HepG2 (cell line): ENCODE measurements at regions of chr1 and their contacts with region 1.

Region 1: DNA sequence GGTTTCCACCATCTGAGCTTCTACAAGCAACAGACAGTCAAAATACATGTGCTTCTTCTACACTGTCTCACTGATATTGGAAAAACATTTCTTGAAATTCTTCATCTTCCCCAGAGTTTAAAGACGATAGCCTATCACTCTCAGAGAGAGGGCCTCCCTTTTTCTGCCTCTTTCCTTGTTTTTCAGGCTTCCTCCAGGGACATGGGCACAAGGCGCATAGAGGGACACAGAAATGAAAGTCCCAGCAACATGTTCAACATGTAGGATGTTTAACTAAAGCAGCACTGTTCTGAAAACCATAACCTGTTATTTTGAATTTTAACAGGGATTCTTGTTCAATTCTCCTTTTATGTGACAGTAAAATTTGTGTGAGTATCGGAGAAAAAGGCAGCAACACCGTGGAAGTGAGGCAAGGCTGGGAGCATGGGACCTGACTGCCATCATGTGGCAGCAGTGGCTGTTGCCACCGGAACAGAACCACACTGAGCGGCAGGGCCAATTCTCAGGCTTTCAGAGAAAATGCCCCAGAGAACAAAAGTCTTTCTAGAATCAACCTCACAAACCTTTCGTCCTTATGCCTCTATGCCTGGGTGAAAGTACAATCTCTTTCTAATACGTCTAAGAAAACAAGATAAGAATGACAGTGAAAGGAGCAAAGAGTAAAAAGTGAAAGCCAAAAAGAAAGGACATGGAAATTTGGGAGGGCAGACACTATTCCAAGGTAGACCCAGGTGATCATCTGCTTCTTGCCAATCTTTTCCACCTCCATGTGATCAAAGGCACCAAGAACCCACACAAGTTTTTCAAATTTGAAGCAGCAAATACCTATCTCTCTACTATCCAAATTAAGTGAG is 54.5 kb downstream of the PCNX2 start:
- DNase-seq: peak; percentile 8
- ATAC-seq: peak; percentile 97
- H3K4me3 ChIP-seq: no peak overlapping the region
- H3K27ac ChIP-seq: no peak overlapping the region
- H3K4me1 ChIP-seq: 0 out of 2 replicates have a peak, but pooled peaks cover 16% of the 10 kb centered on the region
- H3K27me3 ChIP-seq: no peaks in the 10 kb centered on the region; a peak in 1 of 5 replicates
- CTCF ChIP-seq: peak; percentile 85
- EP300 ChIP-seq: no peak
- POLR2A ChIP-seq: no peak
- RAD21 ChIP-seq: peak; percentile 79

Region 2: GRCh38 chr1:231757101-231757404 is 1484.0 kb before region 1 on chr1:
- CTCF ChIA-PET with region 1: no interaction called
- POLR2A ChIA-PET with region 1: no interaction called
- in situ Hi-C with region 1: loop called (anchors 25 kb)
- intact Hi-C with region 1: no loop called
- DNase-seq: no peak
- ATAC-seq: peak; percentile 40
- H3K4me3 ChIP-seq: no peak overlapping the region
- H3K27ac ChIP-seq: no peak overlapping the region
- H3K4me1 ChIP-seq: no peaks in the 10 kb centered on the region
- H3K27me3 ChIP-seq: no peaks in the 10 kb centered on the region
- CTCF ChIP-seq: no peak
- EP300 ChIP-seq: no peak
- POLR2A ChIP-seq: no peak
- RAD21 ChIP-seq: no peak

Region 3: DNA sequence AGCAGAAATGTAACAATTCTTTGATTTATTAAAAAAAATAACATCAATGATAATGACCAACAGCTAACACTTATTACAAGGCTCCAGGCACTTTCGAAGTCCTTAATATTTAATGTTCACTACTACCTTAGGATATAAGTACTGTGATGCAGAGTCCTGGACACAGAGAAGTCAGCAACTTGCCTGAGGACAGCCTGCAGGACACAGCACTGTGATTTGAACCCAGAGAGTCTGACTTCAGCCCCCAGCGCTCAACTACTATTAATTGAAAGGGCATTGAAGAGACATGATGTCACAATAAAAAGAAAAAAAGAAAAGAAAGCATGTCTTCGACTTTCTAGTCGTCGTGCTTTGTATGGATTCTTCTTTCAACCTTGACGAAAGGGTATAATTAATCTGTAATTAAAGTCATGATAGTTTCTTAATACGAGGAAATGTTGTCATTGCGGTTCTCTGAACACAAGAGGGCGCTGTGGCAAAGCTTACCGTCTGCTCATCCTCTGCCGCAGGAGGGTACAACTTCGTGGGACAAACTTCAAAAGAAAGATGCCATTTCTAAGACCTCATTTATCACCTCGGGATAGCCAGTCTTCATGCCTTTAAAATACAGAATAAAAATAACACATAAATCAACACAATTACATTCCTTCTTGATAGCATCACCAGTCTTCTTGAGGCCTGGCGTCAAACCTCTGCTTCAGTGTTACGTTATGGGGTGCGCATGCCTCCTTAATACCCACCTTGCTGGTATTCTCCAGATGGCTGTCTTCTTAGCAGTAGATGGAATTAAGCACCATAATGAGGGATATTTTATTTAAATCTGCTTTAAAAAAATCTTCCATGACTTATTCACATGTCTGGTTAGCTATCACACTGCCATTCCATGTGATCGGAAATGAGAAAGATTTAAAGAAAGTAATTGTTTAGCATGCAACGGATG is 1374.4 kb before region 1 on chr1:
- CTCF ChIA-PET with region 1: no interaction called
- POLR2A ChIA-PET with region 1: no interaction called
- in situ Hi-C with region 1: loop called (anchors 25 kb)
- intact Hi-C with region 1: no loop called
- DNase-seq: peak; percentile 36
- ATAC-seq: peak; percentile 38; the same call in 1 of the 3 replicates
- H3K4me3 ChIP-seq: no peak overlapping the region
- H3K27ac ChIP-seq: no peak overlapping the region
- H3K4me1 ChIP-seq: no peaks in the 10 kb centered on the region
- H3K27me3 ChIP-seq: no peaks in the 10 kb centered on the region; a peak in 1 of 5 replicates
- CTCF ChIP-seq: peak; percentile 81
- EP300 ChIP-seq: no peak
- POLR2A ChIP-seq: no peak
- RAD21 ChIP-seq: peak; percentile 67; the same call in 1 of the 2 replicates

Region 4: GRCh38 chr1:232259333-232259732 is 981.7 kb before region 1 on chr1:
- CTCF ChIA-PET with region 1: no interaction called
- POLR2A ChIA-PET with region 1: no interaction called
- in situ Hi-C with region 1: no loop called
- intact Hi-C with region 1: loop called (anchors 5 kb)
- DNase-seq: no peak
- ATAC-seq: no peak
- H3K4me3 ChIP-seq: no peak overlapping the region
- H3K27ac ChIP-seq: no peak overlapping the region
- H3K4me1 ChIP-seq: no peaks in the 10 kb centered on the region
- H3K27me3 ChIP-seq: peaks cover 0 to 9% of the 10 kb centered on the region in 2 experiments; a peak in 1 of 5 replicates
- CTCF ChIP-seq: no peak
- EP300 ChIP-seq: no peak
- POLR2A ChIP-seq: no peak
- RAD21 ChIP-seq: no peak

Region 5: DNA sequence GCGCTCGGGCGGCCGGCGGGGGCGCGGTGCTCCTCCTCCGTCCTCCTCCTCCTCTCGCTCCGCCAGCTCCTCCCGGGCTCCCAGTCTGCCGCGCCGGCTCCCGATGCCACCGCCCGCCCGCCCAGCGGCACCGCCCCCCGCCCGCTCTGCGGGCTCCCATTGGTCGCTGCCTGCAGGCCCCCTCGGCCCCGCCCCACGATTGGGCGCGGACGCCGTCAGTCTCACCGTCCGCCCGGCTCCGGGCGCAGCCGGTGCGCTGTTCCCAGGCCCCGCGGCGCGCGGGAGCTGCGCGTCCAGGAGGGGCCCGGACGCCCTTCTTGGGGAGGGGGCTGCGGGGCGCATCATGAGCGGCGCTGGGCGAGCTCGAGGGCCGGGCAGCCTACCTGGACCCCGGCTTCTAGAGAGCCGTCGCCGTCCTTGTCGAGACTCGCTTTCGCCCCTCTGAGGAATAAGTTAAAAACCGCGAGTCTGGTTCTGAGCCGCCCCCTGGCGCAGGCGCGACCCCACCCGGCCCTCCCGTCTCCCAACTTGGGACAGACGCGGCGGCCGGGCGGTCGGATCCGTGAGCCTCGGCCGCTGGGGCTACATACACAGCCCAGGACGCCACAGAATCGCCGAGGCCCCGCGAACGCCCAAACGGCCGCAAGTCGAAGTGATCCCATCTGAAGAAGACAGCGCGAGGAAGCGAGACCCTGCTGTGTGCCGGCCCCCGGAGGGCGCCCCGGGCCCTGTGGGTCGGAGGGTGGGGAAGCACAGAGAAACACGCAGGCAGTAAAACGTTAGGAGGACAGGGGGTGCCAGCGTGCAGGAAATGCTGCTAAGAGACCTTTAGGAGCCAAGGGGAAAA is 610.8 kb before region 1 on chr1 and contains the start of gene SIPA1L2:
- CTCF ChIA-PET with region 1: interaction called, 15 read pairs
- POLR2A ChIA-PET with region 1: no interaction called
- in situ Hi-C with region 1: loop called (anchors 5 kb)
- intact Hi-C with region 1: loop called (anchors 1 kb)
- DNase-seq: peak; percentile 52
- ATAC-seq: peak; percentile 99
- H3K4me3 ChIP-seq: peak within 1 kb of the TSS; percentile 52 to 63 (median 56); a peak in 4 of 6 replicates
- H3K27ac ChIP-seq: no peak within 1 kb of the TSS
- H3K4me1 ChIP-seq: no peaks in the 10 kb centered on the region
- H3K27me3 ChIP-seq: peaks cover 5 to 48% of the 10 kb centered on the region in 2 experiments; a peak in 4 of 5 replicates
- CTCF ChIP-seq: peak; percentile 57
- EP300 ChIP-seq: no peak
- POLR2A ChIP-seq: no peak
- RAD21 ChIP-seq: no peak
- total RNA-seq, gene SIPA1L2: 0.03 TPM in 1 of 2 replicates, not detected in the other

Region 6: GRCh38 chr1:232635778-232636356 is 605.2 kb before region 1 on chr1:
- CTCF ChIA-PET with region 1: interaction called, 15 read pairs
- POLR2A ChIA-PET with region 1: no interaction called
- in situ Hi-C with region 1: loop called (anchors 5 kb)
- intact Hi-C with region 1: loop called (anchors 1 kb)
- DNase-seq: peak; percentile 23
- ATAC-seq: peak; percentile 75
- H3K4me3 ChIP-seq: no peak overlapping the region
- H3K27ac ChIP-seq: no peak overlapping the region
- H3K4me1 ChIP-seq: no peaks in the 10 kb centered on the region
- H3K27me3 ChIP-seq: peaks cover 0 to 19% of the 10 kb centered on the region in 2 experiments; a peak in 3 of 5 replicates
- CTCF ChIP-seq: peak; percentile 59
- EP300 ChIP-seq: no peak
- POLR2A ChIP-seq: no peak
- RAD21 ChIP-seq: 0 out of 2 replicates have a peak, but pooled peaks have one; percentile 26

Region 7: GRCh38 chr1:232684363-232685105 is 556.5 kb before region 1 on chr1:
- CTCF ChIA-PET with region 1: no interaction called
- POLR2A ChIA-PET with region 1: no interaction called
- in situ Hi-C with region 1: no loop called
- intact Hi-C with region 1: no loop called
- DNase-seq: no peak
- ATAC-seq: no peak
- H3K4me3 ChIP-seq: no peak overlapping the region
- H3K27ac ChIP-seq: no peak overlapping the region
- H3K4me1 ChIP-seq: no peaks in the 10 kb centered on the region
- H3K27me3 ChIP-seq: peaks cover 0 to 4% of the 10 kb centered on the region in 2 experiments; a peak in 2 of 5 replicates
- CTCF ChIP-seq: no peak
- EP300 ChIP-seq: no peak
- POLR2A ChIP-seq: no peak
- RAD21 ChIP-seq: no peak

Region 8: DNA sequence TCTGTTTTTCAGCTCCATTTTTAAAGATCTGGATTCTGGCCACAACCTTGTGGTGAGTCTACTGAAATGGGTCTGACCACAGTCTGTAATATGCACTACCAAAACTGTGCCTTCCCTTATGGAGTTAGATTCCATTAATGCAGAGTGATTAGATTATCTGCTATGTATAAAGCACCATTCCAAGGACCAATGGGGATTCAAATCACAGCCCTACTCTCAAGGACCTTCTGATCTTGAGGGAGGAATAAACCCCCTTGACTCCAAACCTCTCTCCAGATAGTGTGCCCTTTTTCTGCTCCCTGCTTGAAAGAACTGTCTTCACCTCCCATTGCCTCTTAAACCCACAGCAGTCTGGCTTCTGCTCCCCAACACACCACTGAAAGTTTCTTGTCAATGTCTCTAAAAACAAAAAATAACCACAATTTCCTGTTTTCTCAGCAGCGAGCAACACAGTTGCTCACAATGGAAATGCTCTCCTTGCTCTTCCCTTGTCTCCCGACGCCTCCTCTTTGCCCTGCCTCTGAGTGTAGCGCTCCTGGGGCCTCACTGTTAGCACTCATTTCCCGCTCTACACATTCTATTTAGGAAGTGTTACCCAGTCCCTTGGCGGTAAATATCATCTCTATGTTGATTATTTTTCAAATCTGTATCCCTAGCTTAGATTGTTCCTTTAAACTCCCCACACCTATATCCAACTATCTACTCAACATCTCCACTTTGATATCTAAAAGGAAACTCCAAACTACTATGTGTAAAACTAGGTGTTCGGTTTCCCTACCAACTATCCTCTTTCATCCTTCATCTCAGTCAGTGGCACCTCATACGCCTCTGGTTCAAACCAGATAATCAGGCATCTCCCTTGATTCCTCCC is 40.9 kb after region 1 on chr1:
- CTCF ChIA-PET with region 1: no interaction called
- POLR2A ChIA-PET with region 1: no interaction called
- in situ Hi-C with region 1: no loop called
- intact Hi-C with region 1: no loop called
- DNase-seq: no peak
- ATAC-seq: no peak
- H3K4me3 ChIP-seq: no peak overlapping the region
- H3K27ac ChIP-seq: no peak overlapping the region
- H3K4me1 ChIP-seq: no peaks in the 10 kb centered on the region
- H3K27me3 ChIP-seq: no peaks in the 10 kb centered on the region
- CTCF ChIP-seq: no peak
- EP300 ChIP-seq: no peak
- POLR2A ChIP-seq: no peak
- RAD21 ChIP-seq: no peak